ENCODE measurements at regions of chr11 and their contacts with region 1.

Region 1: DNA sequence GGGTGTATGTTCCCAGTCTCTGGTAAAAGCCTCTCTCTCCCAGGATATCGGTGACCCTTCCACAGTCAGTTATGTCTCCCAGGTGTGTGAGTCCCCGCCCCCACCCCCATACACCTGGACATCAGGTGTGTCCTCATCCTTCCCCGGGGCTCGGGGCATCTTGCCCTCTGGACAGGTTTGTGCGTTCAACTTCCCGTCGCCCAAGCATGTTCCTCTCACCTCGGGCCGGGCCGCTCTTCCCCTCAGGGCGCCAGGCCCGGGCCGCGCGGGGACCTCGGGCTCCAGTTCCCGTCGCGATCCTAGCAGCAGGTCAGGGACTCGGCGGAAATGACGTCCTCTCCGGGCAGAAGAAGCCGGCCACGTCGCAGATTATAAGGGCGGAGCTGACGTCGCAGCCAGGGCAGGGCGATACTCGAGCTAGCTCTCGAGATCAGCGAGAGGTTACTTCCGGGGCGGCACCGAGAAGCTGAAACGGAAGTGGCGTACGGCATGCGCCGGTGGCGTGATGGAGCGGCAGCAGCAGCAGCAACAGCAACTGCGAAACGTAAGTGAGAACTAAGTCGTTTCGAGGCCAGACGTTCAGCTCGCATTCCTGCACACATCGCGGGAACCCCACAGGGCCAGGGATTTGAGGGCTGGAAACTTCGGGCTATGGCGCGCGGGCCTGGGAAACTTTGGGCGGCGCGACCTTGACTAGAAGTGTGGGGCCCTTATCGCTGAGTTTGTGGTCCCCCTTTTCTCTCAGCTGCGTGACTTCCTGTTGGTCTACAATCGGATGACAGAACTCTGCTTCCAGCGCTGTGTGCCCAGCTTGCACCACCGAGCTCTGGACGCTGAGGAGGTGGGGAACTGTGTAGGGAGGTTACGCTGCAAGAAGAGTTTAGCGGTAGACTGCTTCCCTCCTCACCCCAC is at the starts of genes ARFIP2 and TIMM10B:
- DNase-seq: peak; percentile 99
- ATAC-seq: peak; percentile 98
- H3K4me3 Mint-ChIP-seq: peak within 1 kb of the TSS; percentile 80
- H3K27ac Mint-ChIP-seq: peak within 1 kb of the TSS; percentile 92
- H3K4me1 Mint-ChIP-seq: peaks cover 30% of the 10 kb centered on the region
- H3K27me3 Mint-ChIP-seq: no peaks in the 10 kb centered on the region
- total RNA-seq, gene ARFIP2: 36.7 to 40.3 TPM
- total RNA-seq, gene TIMM10B: 27.1 to 39.2 TPM

Region 2: DNA sequence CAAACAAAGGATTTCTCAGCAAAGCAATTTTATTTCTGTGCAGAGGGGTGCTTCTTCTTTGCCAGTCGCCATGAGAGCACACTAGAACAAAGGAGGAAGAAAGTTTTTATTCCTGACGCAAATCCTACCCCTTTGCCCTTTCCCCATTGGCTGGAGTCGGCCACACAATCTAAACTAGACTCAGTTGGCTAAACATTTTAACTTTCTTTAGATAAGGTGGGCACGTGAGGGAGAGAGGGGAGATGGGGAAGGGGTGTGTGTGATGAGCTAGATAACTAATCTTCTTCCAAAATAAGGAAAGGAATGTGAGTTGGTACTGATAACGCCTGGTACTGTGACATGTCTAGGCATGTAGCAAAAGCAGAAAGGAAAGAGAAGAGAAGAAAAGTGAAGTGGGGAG is 791.1 kb before region 1 on chr11:
- CTCF ChIA-PET with region 1: no interaction called
- POLR2A ChIA-PET with region 1: no interaction called
- intact Hi-C with region 1: loop called in 1 of 2 experiments (anchors 5 kb)
- DNase-seq: no peak
- ATAC-seq: no peak
- H3K4me3 Mint-ChIP-seq: peak overlapping the region; percentile 77
- H3K27ac Mint-ChIP-seq: peak overlapping the region; percentile 94
- H3K4me1 Mint-ChIP-seq: peaks cover 55% of the 10 kb centered on the region
- H3K27me3 Mint-ChIP-seq: no peaks in the 10 kb centered on the region

Region 3: GRCh38 chr11:6371825-6372224 is 109.4 kb before region 1 on chr11:
- CTCF ChIA-PET with region 1: no interaction called
- POLR2A ChIA-PET with region 1: no interaction called
- intact Hi-C with region 1: no loop called
- DNase-seq: no peak
- ATAC-seq: no peak
- H3K4me3 Mint-ChIP-seq: no peak overlapping the region
- H3K27ac Mint-ChIP-seq: no peak overlapping the region
- H3K4me1 Mint-ChIP-seq: peaks cover 4% of the 10 kb centered on the region
- H3K27me3 Mint-ChIP-seq: no peaks in the 10 kb centered on the region

Region 4: DNA sequence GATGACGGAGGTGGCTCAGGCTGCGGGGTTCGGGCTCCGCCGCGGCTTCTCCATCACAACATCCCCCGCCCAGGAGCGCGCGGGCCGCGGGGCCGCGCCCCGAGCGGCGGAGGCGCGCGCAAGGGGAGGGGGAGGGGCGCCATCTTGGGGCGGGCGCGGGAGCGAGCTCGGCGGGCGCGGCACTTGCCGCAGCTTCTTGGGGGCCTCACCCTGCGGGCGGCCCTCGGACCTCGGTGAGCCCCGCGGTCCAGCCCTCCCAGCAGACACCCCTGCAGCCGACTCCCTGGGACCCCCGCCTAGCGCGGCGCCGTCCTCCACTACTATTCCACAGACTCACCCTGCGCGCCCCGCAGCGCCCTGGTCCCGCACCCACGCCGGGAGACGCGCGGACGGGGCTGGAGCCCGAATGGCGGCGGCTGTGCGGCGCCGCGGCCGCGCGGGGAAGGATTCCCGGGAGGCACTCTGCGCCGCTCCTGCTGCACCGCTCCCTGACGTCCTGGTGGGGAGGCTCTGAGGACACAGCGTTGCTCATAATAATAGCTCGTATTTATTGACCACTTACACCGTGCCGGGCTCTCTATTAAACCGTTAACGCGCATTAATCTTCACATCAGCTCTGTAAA is 62.1 kb before region 1 on chr11 and contains the start of gene APBB1:
- CTCF ChIA-PET with region 1: interaction called, 4 read pairs
- POLR2A ChIA-PET with region 1: interaction called, 4 read pairs
- intact Hi-C with region 1: loop called (anchors 1 to 5 kb)
- DNase-seq: peak; percentile 86
- ATAC-seq: peak; percentile 54
- H3K4me3 Mint-ChIP-seq: peak within 1 kb of the TSS; percentile 72
- H3K27ac Mint-ChIP-seq: peak within 1 kb of the TSS; percentile 73
- H3K4me1 Mint-ChIP-seq: peaks cover 7% of the 10 kb centered on the region
- H3K27me3 Mint-ChIP-seq: peaks cover 6% of the 10 kb centered on the region
- total RNA-seq, gene APBB1: 43.2 to 49.8 TPM

Region 5: GRCh38 chr11:6612213-6613041 is 131.2 kb after region 1 on chr11 and contains the start of gene TAF10:
- CTCF ChIA-PET with region 1: no interaction called
- POLR2A ChIA-PET with region 1: interaction called, 5 read pairs
- intact Hi-C with region 1: loop called in 1 of 2 experiments (anchors 1 kb)
- DNase-seq: peak; percentile 97
- ATAC-seq: peak; percentile 85
- H3K4me3 Mint-ChIP-seq: no peak within 1 kb of the TSS
- H3K27ac Mint-ChIP-seq: peak within 1 kb of the TSS; percentile 93
- H3K4me1 Mint-ChIP-seq: peaks cover 44% of the 10 kb centered on the region
- H3K27me3 Mint-ChIP-seq: no peaks in the 10 kb centered on the region
- total RNA-seq, gene TAF10: 133 to 152 TPM

Region 6: DNA sequence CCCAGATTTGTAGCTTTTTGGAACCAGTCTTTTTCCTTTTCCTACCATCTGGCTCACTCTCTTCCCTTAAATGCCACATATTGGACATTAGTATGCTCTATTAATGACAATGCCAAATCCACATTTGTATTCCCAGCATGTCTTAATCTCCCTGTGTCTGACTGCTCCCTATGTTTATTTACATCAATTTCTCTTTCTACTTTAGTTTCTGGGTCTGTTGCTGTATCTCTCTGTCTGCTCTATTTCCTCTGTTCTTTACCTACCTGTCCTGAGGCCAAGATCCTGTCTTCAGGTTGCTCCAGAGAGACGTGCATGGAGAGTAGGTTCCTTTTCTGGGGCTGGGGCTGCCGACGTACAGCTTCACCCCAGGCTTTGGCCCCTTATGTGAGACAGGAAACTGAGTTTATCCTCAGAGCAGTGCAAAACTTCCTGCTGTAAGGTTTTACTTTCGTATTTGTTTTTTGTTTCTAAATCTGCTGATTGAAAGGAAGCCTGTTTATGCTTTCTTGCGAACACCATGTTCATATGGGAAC is 264.9 kb after region 1 on chr11:
- CTCF ChIA-PET with region 1: no interaction called
- POLR2A ChIA-PET with region 1: no interaction called
- intact Hi-C with region 1: loop called in 1 of 2 experiments (anchors 2 kb)
- DNase-seq: peak; percentile 58
- ATAC-seq: peak; percentile 85
- H3K4me3 Mint-ChIP-seq: no peak overlapping the region
- H3K27ac Mint-ChIP-seq: no peak overlapping the region
- H3K4me1 Mint-ChIP-seq: peaks cover 30% of the 10 kb centered on the region
- H3K27me3 Mint-ChIP-seq: no peaks in the 10 kb centered on the region